ENCODE measurements at regions of chr5 and their contacts with region 1.

Region 1: DNA sequence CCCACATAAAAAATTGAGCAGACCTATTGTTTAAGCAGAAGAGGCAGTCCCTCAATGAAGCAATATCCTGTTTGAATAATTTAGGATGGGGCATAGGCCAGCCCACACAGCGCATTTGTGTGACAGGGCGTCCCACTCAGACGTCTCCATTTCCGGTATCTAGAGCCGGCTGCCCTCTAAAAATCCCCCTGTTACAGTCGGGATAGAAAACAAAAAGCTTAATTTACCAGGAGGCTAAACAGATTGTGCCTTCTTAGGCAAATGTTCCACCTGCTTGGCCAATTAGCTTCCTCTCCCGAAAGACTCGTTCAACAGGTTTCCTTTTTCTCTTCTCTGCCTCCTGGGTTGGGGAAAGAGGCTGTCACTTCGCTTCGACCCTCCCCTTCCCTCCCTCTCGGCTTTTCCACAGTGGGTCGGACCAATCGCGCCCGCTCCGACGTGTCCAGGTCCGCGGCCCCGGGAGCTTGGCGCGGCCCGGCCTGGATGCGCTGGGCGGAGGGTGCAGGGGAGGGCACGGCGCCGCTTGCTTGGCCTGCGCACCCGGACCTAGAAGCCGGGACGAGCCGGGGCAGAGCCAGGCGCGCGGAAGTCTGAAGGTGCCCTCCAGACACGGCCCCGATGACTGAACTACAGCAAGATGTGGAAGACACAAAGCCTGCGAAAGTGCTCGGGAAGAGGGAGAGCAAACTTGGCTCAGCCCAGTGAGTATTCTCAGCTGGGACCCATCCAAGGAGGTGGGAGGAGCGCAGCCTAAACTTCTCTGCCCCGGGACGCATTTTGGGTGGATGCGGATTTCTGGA is at the start of gene GRAMD2B:
- DNase-seq: peak; percentile 61 to 87
- ATAC-seq: peak; percentile 91 to 96 (median 92)
- H3K4me3 ChIP-seq: peak within 1 kb of the TSS; percentile 70
- H3K4me3 Mint-ChIP-seq: peak within 1 kb of the TSS; percentile 89
- H3K27ac ChIP-seq: peak within 1 kb of the TSS; percentile 85
- H3K27ac Mint-ChIP-seq: peak within 1 kb of the TSS; percentile 88 to 93
- H3K4me1 ChIP-seq: peaks cover 7% of the 10 kb centered on the region
- H3K4me1 Mint-ChIP-seq: peaks cover 19 to 25% of the 10 kb centered on the region in 2 donors
- H3K27me3 ChIP-seq: no peaks in the 10 kb centered on the region
- H3K27me3 Mint-ChIP-seq: no peaks in the 10 kb centered on the region
- CTCF ChIP-seq: no peak
- total RNA-seq, gene GRAMD2B: 9.2 to 15.4 (median 10.0) TPM

Region 2: GRCh38 chr5:126449751-126450271 is 26.6 kb after region 1 on chr5:
- intact Hi-C with region 1: loop called (anchors 1 kb)
- DNase-seq: peak; percentile 50 to 81
- ATAC-seq: peak; percentile 78 to 91 (median 82)
- H3K4me3 ChIP-seq: peak overlapping the region; percentile 24
- H3K4me3 Mint-ChIP-seq: peak overlapping the region; percentile 97
- H3K27ac ChIP-seq: peak overlapping the region; percentile 93
- H3K27ac Mint-ChIP-seq: peak overlapping the region; percentile 100
- H3K4me1 ChIP-seq: peaks cover 18% of the 10 kb centered on the region
- H3K4me1 Mint-ChIP-seq: peaks cover 41 to 47% of the 10 kb centered on the region in 2 donors
- H3K27me3 ChIP-seq: no peaks in the 10 kb centered on the region
- H3K27me3 Mint-ChIP-seq: no peaks in the 10 kb centered on the region
- CTCF ChIP-seq: no peak

Region 3: GRCh38 chr5:126568206-126568755 is 145.1 kb after region 1 on chr5:
- intact Hi-C with region 1: no loop called
- DNase-seq: no peak
- ATAC-seq: no peak
- H3K4me3 ChIP-seq: no peak overlapping the region
- H3K4me3 Mint-ChIP-seq: no peak overlapping the region
- H3K27ac ChIP-seq: no peak overlapping the region
- H3K27ac Mint-ChIP-seq: no peak overlapping the region
- H3K4me1 ChIP-seq: no peaks in the 10 kb centered on the region
- H3K4me1 Mint-ChIP-seq: no peaks in the 10 kb centered on the region
- H3K27me3 ChIP-seq: no peaks in the 10 kb centered on the region
- H3K27me3 Mint-ChIP-seq: no peaks in the 10 kb centered on the region
- CTCF ChIP-seq: no peak

Measured in natural killer cell (primary cell).